ENCODE measurements at regions of chr17 and their contacts with region 1.

Region 1: DNA sequence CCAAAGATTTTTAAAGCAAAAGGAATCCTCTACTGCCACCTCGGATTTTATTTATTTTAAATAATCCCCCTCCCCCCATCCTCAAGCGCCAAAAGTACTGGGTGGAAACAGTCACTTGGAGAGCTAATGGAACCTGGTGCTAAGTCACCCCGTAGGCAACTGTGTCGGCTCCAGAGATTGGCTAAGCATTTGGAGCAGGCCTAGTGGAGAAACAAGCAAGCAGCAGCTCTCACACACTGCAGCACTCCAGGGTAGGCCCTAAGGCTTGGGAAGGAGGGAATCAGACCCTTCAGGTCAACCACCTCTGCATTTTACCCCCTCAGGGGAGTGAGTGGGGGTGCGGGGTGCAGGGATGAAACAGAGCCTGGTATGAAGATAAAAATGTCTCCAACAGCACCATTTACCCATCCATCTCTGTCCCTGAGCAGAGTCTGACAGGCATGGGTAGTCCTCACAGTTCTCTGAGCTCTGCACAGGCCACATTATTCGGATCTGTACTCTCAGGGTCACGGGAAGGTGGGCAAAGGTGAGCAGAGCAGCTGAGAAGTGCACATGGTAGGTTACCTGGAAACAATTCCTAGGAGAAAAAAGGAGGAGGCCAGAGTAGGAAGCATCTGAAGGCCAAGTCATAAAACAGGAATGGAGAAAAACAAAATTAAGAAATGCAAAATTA is 27.2 kb upstream of the STAC2 start:
- DNase-seq: no peak
- H3K4me3 ChIP-seq: no peak overlapping the region
- H3K27ac ChIP-seq: no peak overlapping the region
- H3K4me1 ChIP-seq: no peaks in the 10 kb centered on the region
- H3K27me3 ChIP-seq: no peaks in the 10 kb centered on the region
- CTCF ChIP-seq: no peak
- EP300 ChIP-seq: no peak
- RAD21 ChIP-seq: no peak

Region 2: GRCh38 chr17:38509008-38509771 is 743.7 kb before region 1 on chr17:
- CTCF ChIA-PET with region 1: no interaction called
- POLR2A ChIA-PET with region 1: no interaction called
- DNase-seq: peak; percentile 98
- H3K4me3 ChIP-seq: peak overlapping the region; percentile 17 to 50; a peak in 2 of 4 replicates
- H3K27ac ChIP-seq: no peak overlapping the region
- H3K4me1 ChIP-seq: peaks cover 13 to 14% of the 10 kb centered on the region in 2 experiments; a peak in 2 of 4 replicates
- H3K27me3 ChIP-seq: no peaks in the 10 kb centered on the region
- CTCF ChIP-seq: peak; percentile 83
- EP300 ChIP-seq: no peak
- RAD21 ChIP-seq: peak; percentile 70

Region 3: GRCh38 chr17:39164675-39165143 is 88.2 kb before region 1 on chr17:
- CTCF ChIA-PET with region 1: no interaction called
- POLR2A ChIA-PET with region 1: no interaction called
- DNase-seq: peak; percentile 98
- H3K4me3 ChIP-seq: peak overlapping the region; percentile 50 to 62
- H3K27ac ChIP-seq: no peak overlapping the region
- H3K4me1 ChIP-seq: peaks cover 0 to 3% of the 10 kb centered on the region in 2 experiments; a peak in 2 of 4 replicates
- H3K27me3 ChIP-seq: no peaks in the 10 kb centered on the region
- CTCF ChIP-seq: peak; percentile 78
- EP300 ChIP-seq: no peak
- RAD21 ChIP-seq: peak; percentile 35; the same call in 1 of the 2 replicates

Region 4: DNA sequence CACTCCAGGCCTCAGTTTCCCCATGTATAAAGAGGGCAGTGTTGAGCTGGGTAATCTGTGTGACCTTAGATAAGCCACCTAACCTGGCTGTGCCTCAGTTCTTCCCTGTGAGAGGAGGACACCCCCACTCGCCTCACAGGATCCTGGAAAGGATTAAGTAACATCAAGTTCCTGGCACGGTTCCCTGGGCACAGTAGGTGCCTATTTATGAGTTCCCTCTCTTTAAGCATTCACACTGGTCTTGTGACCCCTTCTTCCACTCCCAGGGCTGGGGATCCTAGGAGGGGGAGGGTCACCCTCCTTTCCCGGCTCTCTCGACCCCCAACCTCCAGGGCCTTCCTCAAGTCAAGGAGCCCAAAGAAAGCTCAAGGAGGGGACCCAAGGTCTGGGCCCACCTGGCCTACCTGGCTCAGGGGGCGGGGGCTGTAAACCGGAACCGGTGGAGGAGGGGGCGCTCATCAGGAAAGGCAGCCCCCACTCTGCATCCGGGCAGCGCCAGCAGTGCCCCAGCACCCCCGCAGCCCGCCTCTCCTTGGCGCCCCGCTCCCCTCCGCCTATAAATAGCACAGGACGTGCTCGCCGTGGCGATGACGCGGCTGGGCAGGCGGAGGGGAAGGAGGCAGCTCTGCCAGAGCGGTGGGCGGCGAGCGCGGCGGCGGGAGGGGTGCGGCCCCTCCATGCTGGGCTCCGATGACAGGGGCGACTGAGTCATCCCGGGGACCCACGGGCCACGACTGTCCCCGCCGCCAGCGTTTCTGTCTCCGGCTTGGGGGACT is 43.4 kb before region 1 on chr17:
- CTCF ChIA-PET with region 1: interaction called, 781 read pairs
- POLR2A ChIA-PET with region 1: no interaction called
- DNase-seq: peak; percentile 78
- H3K4me3 ChIP-seq: peak overlapping the region; percentile 38 to 56
- H3K27ac ChIP-seq: no peak overlapping the region
- H3K4me1 ChIP-seq: peaks cover 9% of the 10 kb centered on the region in 2 experiments; a peak in 2 of 4 replicates
- H3K27me3 ChIP-seq: no peaks in the 10 kb centered on the region
- CTCF ChIP-seq: no peak
- EP300 ChIP-seq: no peak
- RAD21 ChIP-seq: no peak

Region 5: GRCh38 chr17:39281806-39282205 is 28.9 kb after region 1 on chr17:
- CTCF ChIA-PET with region 1: no interaction called
- POLR2A ChIA-PET with region 1: no interaction called
- DNase-seq: no peak
- H3K4me3 ChIP-seq: no peak overlapping the region
- H3K27ac ChIP-seq: peak overlapping the region in 1 of 2 experiments; percentile 71; a peak in 3 of 4 replicates
- H3K4me1 ChIP-seq: peaks cover 0 to 12% of the 10 kb centered on the region in 2 experiments; a peak in 1 of 4 replicates
- H3K27me3 ChIP-seq: no peaks in the 10 kb centered on the region
- CTCF ChIP-seq: no peak
- EP300 ChIP-seq: no peak
- RAD21 ChIP-seq: no peak

Measured in SK-N-SH (cell line).